PC-3 (cell line): ENCODE measurements at regions of chr10 and their contacts with region 1.

Region 1: DNA sequence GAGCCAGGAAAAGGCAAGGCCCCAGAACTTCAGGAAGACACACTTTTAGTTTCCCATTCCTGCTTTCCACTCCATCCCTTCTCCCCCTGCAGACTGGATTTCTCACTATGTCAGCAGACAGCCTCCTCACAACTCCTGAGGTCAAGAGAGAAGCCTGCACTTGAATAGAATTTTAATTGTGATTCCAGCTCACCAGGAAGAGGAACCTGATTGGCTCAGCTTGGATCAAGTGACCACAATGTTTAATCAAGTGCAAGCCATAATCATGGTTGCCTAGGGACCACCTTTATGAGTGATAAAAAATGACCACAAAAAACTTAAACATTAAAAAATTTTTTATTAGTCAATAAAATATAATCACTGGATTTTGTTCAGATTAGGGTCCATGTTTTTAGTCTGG is 244.7 kb upstream of the RHOBTB1 start:
- DNase-seq: peak; percentile 16
- ATAC-seq: peak; percentile 61
- H3K4me3 ChIP-seq: no peak overlapping the region
- H3K27ac ChIP-seq: no peak overlapping the region
- H3K4me1 ChIP-seq: no peaks in the 10 kb centered on the region
- H3K27me3 ChIP-seq: no peaks in the 10 kb centered on the region
- CTCF ChIP-seq: no peak

Region 2: DNA sequence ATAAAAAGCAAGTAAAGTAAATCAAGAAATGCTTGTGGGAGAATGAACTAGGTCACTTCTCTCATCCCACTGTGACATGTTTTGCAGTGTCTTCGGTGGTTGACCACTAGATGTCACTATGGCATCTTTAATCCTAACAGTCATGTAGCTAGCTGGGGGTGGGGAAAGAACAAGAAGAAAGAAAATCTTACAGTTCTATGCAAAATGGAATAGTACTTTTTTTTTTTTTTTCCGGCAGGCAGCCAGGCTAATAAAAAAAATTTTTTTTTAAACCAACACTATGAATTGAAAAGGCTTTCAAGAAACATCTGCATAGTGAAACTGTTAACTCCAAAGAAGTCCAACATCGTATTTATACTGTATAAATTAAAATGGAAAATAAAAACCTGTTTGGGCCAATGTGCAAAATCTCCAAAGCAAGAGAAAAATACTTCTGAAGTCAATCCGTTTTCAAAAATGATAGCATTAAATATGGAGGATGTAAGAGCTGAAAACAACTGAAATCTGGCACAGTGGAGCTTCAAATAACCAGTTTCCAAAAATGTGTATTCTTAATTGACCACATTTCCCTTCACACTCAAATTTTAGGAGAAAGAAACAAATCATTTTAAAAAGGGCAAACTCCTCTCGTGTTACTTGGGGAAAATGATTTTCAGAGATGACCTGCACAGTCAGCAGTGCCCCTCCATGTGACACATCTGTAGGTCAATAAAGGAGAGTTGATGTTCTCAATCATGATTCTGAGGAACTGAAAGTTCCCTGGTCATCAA is 371.9 kb before region 1 on chr10:
- CTCF ChIA-PET with region 1: interaction called, 6 read pairs
- POLR2A ChIA-PET with region 1: no interaction called
- intact Hi-C with region 1: loop called (anchors 1 kb)
- DNase-seq: peak; percentile 97
- ATAC-seq: peak; percentile 93
- H3K4me3 ChIP-seq: no peak overlapping the region
- H3K27ac ChIP-seq: no peak overlapping the region
- H3K4me1 ChIP-seq: peaks cover 6% of the 10 kb centered on the region; the same call in 1 of the 2 replicates
- H3K27me3 ChIP-seq: no peaks in the 10 kb centered on the region
- CTCF ChIP-seq: peak; percentile 100

Region 3: DNA sequence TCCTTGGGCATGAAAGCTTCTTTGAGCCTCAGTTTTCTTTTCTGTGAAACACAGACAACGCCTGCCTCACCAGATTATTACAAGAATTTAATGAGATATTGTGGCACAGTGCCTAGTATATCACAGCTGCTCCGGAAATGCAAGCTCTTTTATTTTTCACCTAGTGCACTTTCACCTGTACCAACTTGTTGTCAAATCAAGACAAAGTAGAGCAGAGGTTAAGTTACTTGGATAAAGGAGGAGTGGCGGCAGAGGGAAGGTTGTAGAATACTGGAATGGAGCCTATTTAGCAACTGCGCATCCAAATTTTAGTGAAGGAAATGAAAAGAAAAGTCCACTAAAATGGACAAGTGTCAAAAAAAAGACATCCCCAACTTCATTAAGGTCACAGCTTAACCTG is 189.8 kb before region 1 on chr10:
- CTCF ChIA-PET with region 1: no interaction called
- POLR2A ChIA-PET with region 1: interaction called, 22 read pairs
- intact Hi-C with region 1: no loop called
- DNase-seq: no peak
- ATAC-seq: no peak
- H3K4me3 ChIP-seq: no peak overlapping the region
- H3K27ac ChIP-seq: no peak overlapping the region
- H3K4me1 ChIP-seq: peaks cover 8% of the 10 kb centered on the region; the same call in 1 of the 2 replicates
- H3K27me3 ChIP-seq: peaks cover 5% of the 10 kb centered on the region
- CTCF ChIP-seq: no peak

Region 4: GRCh38 chr10:61164458-61165160 is 24.1 kb before region 1 on chr10:
- CTCF ChIA-PET with region 1: interaction called, 4 read pairs
- POLR2A ChIA-PET with region 1: no interaction called
- intact Hi-C with region 1: loop called (anchors 1 kb)
- DNase-seq: peak; percentile 88
- ATAC-seq: peak; percentile 80
- H3K4me3 ChIP-seq: no peak overlapping the region
- H3K27ac ChIP-seq: no peak overlapping the region
- H3K4me1 ChIP-seq: peaks cover 8% of the 10 kb centered on the region; the same call in 1 of the 2 replicates
- H3K27me3 ChIP-seq: no peaks in the 10 kb centered on the region
- CTCF ChIP-seq: no peak

Region 5: GRCh38 chr10:61492364-61492995 is 303.8 kb after region 1 on chr10:
- CTCF ChIA-PET with region 1: interaction called, 13 read pairs
- POLR2A ChIA-PET with region 1: no interaction called
- intact Hi-C with region 1: no loop called
- DNase-seq: no peak
- ATAC-seq: no peak
- H3K4me3 ChIP-seq: no peak overlapping the region
- H3K27ac ChIP-seq: no peak overlapping the region
- H3K4me1 ChIP-seq: peaks cover 5% of the 10 kb centered on the region
- H3K27me3 ChIP-seq: peaks cover 23% of the 10 kb centered on the region
- CTCF ChIP-seq: no peak